ENCODE measurements at regions of chr12 and their contacts with region 1.

Region 1: DNA sequence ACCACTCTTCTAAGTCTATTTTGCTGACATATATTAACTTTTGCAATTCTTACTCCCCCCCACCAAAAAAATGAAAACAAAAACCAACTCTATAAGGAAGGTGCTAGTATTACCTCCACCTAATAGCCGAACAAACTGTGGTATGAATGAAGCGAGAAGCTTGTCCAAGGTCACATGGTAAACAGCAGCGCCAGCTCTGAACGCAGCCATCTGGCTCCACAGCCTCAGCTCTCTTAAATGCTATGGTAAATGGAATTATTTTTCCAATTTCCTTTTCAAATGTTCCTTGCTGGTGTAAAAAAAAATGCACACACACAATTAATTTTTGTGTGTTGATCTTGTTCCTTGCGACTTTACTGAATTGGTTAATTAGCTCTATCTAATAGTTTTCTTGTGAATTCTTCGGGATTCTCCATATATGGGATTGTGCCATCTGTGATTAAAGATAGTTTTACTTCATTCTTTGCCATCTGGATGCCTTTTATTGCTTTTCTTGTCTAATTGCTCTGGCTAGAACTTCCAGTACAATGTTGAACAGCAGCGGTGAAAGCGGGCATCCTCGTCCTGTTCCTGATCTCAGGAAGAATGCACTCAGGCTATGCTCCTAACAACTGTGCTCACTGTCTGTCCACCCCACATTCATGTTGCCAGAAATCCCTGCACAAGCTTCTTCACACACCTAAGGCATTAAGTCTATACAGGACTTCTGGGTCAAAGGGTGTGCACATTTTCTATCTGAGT is 10.7 kb upstream of the C12orf76 start:
- DNase-seq: no peak
- ATAC-seq: no peak
- H3K4me3 ChIP-seq: no peak overlapping the region
- H3K27ac ChIP-seq: peak overlapping the region; percentile 80; the same call in 2 of the 3 replicates
- H3K4me1 ChIP-seq: peaks cover 6 to 41% of the 10 kb centered on the region in 2 experiments
- H3K27me3 ChIP-seq: no peaks in the 10 kb centered on the region
- CTCF ChIP-seq: no peak
- EP300 ChIP-seq: no peak
- POLR2A ChIP-seq: no peak
- RAD21 ChIP-seq: no peak

Region 2: DNA sequence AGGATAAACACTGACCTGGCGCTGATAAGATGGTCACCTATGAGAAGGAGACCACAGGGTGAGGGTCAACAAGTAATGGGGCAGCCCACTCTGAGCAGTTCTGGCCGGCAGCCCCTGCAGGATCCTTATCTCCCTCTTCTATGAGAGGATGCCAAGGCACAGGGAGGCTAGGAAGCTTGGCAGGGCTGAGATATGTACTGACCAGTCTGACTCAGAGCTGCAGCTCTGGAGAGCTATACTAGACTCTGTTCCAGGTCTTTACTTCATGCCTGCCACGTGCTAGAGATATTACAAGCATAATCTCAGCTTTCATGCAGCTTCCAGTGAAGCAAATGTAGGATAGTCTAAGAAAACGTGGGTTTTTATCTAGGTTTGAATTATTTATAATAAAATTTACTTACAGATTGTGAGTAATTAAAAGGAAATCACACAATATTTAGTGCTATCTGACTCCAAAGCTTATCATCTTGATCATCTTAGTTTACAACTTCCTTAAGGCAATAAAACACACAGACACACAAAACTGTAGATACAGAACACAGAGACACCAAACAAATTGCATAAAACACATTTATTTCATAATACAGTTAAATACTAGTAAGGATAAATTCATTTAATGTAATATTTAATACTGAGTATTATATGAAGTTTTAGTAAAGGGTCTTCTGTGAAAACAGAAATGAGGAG is 95.2 kb before region 1 on chr12:
- CTCF ChIA-PET with region 1: no interaction called
- POLR2A ChIA-PET with region 1: no interaction called
- in situ Hi-C with region 1: no loop called
- intact Hi-C with region 1: no loop called
- DNase-seq: no peak
- ATAC-seq: no peak
- H3K4me3 ChIP-seq: no peak overlapping the region
- H3K27ac ChIP-seq: no peak overlapping the region
- H3K4me1 ChIP-seq: no peaks in the 10 kb centered on the region
- H3K27me3 ChIP-seq: no peaks in the 10 kb centered on the region
- CTCF ChIP-seq: no peak
- EP300 ChIP-seq: no peak
- POLR2A ChIP-seq: no peak
- RAD21 ChIP-seq: no peak

Region 3: DNA sequence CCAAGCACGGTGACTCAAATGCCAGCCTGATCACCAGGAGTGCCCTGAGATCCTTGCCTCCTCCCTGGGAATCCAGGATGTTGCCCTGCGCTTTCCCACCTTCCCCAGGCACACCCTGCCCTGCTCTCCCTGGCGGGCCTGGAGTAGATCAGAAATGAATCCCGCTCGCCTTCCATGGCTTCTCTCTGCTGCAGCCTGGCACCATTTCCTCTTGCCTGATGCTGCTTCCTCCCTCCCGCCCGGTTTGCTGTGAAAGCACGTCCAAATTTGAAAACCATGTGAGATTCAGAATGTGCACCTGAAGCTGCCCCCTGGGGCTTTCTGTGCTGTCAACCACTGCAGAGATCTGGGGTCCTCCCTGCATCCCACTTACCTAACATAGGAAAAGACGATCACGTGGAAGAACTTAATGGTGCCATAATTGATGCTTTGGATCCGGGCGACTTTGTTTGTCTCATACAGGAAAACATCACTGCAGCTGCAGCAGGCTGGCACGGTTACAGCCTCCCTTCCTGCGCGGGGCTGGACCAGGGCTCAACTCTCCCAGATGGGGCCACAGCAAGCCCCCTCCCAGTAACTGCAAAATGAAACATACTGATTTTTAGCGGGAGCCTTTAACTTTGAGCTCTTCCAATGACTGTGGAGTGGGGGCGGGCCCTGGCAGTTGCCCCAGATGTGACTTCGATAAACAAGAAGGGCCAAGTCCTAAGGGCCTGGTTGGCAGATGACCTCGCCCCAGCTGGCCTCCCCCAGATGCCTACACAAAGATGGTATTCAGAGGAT is 14.2 kb after region 1 on chr12:
- CTCF ChIA-PET with region 1: no interaction called
- POLR2A ChIA-PET with region 1: interaction called, 13 read pairs
- in situ Hi-C with region 1: no loop called
- intact Hi-C with region 1: no loop called
- DNase-seq: no peak
- ATAC-seq: peak; percentile 43
- H3K4me3 ChIP-seq: no peak overlapping the region
- H3K27ac ChIP-seq: no peak overlapping the region
- H3K4me1 ChIP-seq: peaks cover 10 to 19% of the 10 kb centered on the region in 2 experiments
- H3K27me3 ChIP-seq: no peaks in the 10 kb centered on the region
- CTCF ChIP-seq: no peak
- EP300 ChIP-seq: no peak
- POLR2A ChIP-seq: no peak
- RAD21 ChIP-seq: no peak

Region 4: GRCh38 chr12:110271015-110271414 is 212.0 kb after region 1 on chr12:
- CTCF ChIA-PET with region 1: no interaction called
- POLR2A ChIA-PET with region 1: no interaction called
- in situ Hi-C with region 1: no loop called
- intact Hi-C with region 1: no loop called
- DNase-seq: no peak
- ATAC-seq: no peak
- H3K4me3 ChIP-seq: no peak overlapping the region
- H3K27ac ChIP-seq: no peak overlapping the region
- H3K4me1 ChIP-seq: peaks cover 27 to 50% of the 10 kb centered on the region in 2 experiments
- H3K27me3 ChIP-seq: no peaks in the 10 kb centered on the region
- CTCF ChIP-seq: no peak
- EP300 ChIP-seq: no peak
- POLR2A ChIP-seq: no peak
- RAD21 ChIP-seq: no peak

Measured in K562 (cell line).